ENCODE measurements at regions of chr7 and their contacts with region 1.

Region 1: DNA sequence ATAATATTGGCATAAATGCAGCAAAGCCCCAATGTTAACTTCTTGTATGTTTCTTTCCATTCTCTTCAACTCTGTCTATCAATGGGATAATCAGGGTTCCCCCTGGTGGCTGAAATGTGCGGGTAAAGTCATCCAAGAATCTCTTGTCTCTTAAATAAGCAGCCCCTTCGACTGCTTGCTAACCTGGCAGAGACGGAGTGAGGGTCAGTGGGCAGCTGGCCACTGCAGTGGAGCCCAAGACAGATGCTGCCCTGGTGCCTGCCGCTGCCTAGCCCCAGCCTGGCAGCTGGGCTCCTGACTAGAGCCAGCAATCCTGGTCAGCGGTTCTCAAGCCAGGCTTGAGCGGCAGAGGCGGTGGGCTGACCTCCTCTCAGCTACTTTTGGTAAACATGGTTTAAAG is 248.9 kb downstream of the COBL start:
- DNase-seq: no peak
- H3K4me3 ChIP-seq: no peak overlapping the region
- H3K27ac ChIP-seq: no peak overlapping the region
- H3K4me1 ChIP-seq: peaks cover 0 to 19% (median 4%) of the 10 kb centered on the region in 3 donors
- H3K27me3 ChIP-seq: no peaks in the 10 kb centered on the region
- CTCF ChIP-seq: peak; percentile 39 to 74 (median 58)
- POLR2A ChIP-seq: no peak

Region 2: DNA sequence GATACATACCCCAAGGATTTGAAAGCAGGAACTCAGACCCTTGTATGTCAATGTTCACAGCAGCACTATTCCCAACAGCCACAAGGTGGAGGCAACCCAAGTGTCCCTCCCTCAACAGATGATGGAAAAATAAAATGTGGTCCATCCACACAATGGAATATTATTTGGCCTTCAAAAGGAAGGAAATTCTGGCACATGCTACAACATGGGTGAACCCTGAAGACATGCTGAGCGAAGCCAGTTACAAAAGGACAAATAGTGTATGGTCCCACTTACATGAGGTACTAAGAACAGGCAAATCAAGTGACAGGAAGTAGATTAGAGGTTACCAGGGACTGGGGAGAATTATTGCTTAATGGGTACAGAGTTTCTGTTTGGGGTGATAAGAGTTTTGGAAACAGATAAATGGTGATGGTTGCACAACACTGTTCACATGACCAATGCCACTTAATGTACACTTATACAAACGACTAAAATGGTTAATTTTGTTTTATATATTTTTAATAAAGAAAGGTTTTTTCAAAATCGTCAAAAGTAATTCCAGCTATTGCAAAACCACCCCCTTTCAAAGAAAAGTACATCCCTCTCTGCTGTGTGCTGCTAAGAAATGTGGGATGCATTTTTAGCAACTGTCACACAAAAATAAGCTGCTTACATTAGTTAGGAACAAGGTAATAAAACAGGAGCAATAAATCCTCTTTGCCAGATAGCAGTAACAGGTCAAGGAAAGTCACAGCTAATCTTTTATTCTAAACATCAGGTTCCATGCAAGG is 370.8 kb before region 1 on chr7:
- intact Hi-C with region 1: loop called (anchors 10 kb)
- DNase-seq: no peak
- H3K4me3 ChIP-seq: no peak overlapping the region
- H3K27ac ChIP-seq: peak overlapping the region in 1 of 4 donors; percentile 34
- H3K4me1 ChIP-seq: peaks cover 0 to 9% (median 0%) of the 10 kb centered on the region in 3 donors
- H3K27me3 ChIP-seq: no peaks in the 10 kb centered on the region
- CTCF ChIP-seq: peak in 5 of 6 experiments; percentile 29 to 64 (median 47)
- POLR2A ChIP-seq: no peak

Region 3: DNA sequence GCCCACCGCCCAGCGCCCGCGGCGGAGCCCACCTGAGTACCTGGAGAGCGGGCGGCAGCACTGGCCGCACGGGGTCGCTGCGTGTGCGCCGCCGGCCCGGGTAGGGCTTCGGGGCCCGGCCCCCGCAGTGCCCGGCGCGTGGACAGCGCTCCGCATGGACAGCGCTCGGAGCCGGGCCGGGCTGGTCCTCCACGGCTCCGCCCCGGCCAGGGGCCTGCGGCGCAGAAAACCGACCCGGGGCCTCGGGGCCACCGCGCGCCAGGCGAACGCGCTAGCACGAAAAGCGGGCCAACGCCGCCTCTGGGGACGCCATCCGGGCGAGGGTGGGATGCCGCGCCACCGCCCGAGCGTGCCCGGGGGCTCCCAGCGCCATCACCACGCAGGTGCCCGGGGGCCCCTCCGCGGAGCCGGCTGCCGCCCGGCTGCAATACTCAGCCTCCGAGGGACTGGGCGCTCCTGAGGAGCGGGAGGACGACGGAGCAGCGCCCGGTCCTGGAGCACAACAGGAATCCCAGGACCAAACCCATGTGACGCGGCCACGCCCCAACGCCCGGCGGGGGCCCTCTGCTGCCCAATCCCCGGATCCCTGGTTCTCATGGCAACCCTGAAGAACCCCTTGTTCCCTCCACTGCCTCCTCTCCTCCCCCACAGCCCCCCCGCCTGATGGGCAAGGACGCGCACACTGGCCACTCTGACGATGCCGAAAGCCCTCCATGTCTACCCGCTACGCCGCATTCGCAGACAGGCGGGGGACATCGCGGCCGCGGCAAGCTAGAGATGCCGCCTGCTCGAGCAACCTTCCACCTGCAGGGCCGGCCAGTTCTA is 285.2 kb before region 1 on chr7 and contains the start of gene GRB10:
- intact Hi-C with region 1: loop called (anchors 10 kb)
- DNase-seq: no peak
- H3K4me3 ChIP-seq: peak within 1 kb of the TSS; percentile 31 to 71 (median 46)
- H3K27ac ChIP-seq: peak within 1 kb of the TSS in 1 of 4 donors; percentile 44
- H3K4me1 ChIP-seq: peaks cover 3 to 35% (median 11%) of the 10 kb centered on the region in 3 donors
- H3K27me3 ChIP-seq: peaks cover 0 to 8% (median 0%) of the 10 kb centered on the region in 4 donors
- CTCF ChIP-seq: peak in 1 of 6 experiments; percentile 9
- POLR2A ChIP-seq: no peak
- total RNA-seq, gene GRB10: 3.5 to 35.1 (median 9.2) TPM

Region 4: GRCh38 chr7:51102828-51103227 is 35.1 kb after region 1 on chr7:
- intact Hi-C with region 1: no loop called
- DNase-seq: no peak
- H3K4me3 ChIP-seq: no peak overlapping the region
- H3K27ac ChIP-seq: no peak overlapping the region
- H3K4me1 ChIP-seq: no peaks in the 10 kb centered on the region
- H3K27me3 ChIP-seq: no peaks in the 10 kb centered on the region
- CTCF ChIP-seq: no peak
- POLR2A ChIP-seq: no peak

Region 5: DNA sequence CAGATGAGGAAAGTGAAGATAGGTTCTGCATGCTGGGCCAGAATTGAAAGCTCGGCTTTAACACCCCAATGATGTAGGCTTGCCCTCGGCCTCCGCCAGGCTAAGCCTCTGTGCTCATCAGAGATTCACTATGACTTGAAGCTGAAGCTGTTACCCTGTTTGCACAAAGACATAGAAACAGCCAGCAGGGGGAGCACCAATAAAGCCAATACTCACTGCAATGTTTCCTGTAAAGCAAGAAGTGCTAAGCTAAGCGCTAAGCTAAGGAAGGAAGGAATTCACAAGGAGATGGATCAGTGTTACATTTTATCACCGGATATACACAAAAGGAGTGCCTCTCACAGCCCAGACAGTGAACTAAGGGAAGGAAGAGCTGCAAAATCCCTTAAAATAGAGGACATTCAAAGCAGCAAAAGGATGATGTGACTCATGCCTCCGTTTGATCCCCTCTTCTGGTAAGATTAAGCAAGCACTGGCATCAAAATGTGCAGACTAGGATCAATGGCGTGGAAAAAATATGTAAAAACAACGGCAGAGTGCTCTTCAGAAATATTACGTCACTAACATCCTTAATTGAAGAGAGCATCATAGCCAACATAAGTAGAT is 95.1 kb after region 1 on chr7:
- intact Hi-C with region 1: no loop called
- DNase-seq: no peak
- H3K4me3 ChIP-seq: no peak overlapping the region
- H3K27ac ChIP-seq: no peak overlapping the region
- H3K4me1 ChIP-seq: peaks cover 0 to 15% (median 2%) of the 10 kb centered on the region in 3 donors
- H3K27me3 ChIP-seq: peaks cover 0 to 6% (median 0%) of the 10 kb centered on the region in 4 donors
- CTCF ChIP-seq: peak; percentile 54 to 83 (median 80)
- POLR2A ChIP-seq: no peak

Measured in esophagus squamous epithelium (tissue), 5 donors.